ENCODE measurements at regions of chr3 and their contacts with region 1.

Region 1: GRCh38 chr3:188664795-188665194 is 507.0 kb upstream of the TPRG1 start:
- DNase-seq: no peak
- H3K4me3 Mint-ChIP-seq: no peak overlapping the region
- H3K27ac Mint-ChIP-seq: no peak overlapping the region
- H3K4me1 Mint-ChIP-seq: peaks cover 7% of the 10 kb centered on the region
- H3K27me3 Mint-ChIP-seq: peaks cover 2% of the 10 kb centered on the region

Region 2: DNA sequence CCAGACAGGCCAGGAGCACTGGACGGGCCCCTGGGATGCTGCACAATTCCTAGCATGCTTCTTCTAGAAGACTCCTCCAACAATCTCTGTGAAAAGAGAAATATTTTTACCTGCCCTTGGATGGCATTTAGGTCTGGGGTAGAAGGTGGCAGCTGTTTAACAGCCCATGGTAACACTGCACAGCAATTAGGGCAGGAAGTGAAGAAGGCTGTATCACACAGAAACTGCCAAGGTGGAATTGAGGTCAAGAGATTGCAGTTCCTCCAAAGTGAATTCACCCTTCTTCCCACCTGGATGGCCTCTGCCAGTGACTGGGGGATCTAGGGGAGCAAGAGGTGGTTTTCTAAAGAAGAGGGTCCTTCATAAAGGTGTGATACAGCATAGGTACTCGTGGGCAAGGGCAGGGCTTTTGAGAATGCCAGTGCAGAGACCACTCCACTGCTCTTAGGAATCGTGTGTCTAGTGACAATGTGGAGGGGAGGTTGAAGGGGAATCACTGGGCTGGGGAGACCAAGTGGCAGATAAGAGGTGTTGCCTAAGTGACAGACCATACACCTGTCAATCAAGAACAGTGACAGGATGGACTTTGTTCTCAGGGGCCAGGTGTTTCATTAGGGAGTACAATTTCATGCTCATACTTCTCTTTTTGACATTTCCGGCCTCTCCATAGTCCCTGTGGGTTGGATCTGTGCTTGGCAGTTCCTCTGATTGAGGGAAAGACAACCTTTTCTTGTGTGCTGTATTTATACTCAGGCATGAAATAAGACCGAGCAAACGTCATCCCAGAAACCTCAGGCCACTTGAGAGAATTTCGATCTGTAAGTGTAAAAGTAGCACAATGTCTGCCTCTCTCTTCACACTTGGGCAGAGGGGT is 836.0 kb before region 1 on chr3:
- intact Hi-C with region 1: loop called (anchors 5 kb)
- DNase-seq: no peak
- H3K4me3 Mint-ChIP-seq: no peak overlapping the region
- H3K27ac Mint-ChIP-seq: peak overlapping the region; percentile 52
- H3K4me1 Mint-ChIP-seq: peaks cover 40% of the 10 kb centered on the region
- H3K27me3 Mint-ChIP-seq: no peaks in the 10 kb centered on the region

Region 3: DNA sequence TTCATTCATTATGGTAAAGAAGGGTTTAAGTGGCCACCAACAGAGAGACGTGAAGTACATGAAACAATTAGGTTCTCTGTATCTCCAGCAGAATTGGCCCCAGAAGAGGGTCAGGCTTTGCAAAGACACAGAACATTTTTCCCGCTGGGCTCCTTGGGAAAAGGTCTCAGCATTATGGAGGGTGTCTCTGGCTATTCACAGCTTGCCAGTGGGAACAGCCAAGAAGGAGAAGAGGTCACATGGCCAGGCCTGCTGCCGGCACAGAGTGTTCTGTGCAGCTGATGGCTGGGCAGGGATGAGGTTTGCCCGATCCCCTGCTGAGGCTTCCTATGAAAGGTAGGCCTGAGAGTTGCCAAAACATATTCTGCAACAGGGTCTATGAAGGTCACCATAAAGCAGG is 588.6 kb before region 1 on chr3:
- intact Hi-C with region 1: no loop called
- DNase-seq: no peak
- H3K4me3 Mint-ChIP-seq: no peak overlapping the region
- H3K27ac Mint-ChIP-seq: no peak overlapping the region
- H3K4me1 Mint-ChIP-seq: peaks cover 9% of the 10 kb centered on the region
- H3K27me3 Mint-ChIP-seq: peaks cover 3% of the 10 kb centered on the region